Psoas muscle (tissue), 8 donors: ENCODE measurements at regions of chr20 and their contacts with region 1.

Region 1: GRCh38 chr20:46132705-46133120 is 14.6 kb downstream of the CD40 start:
- DNase-seq: peak; percentile 71 to 82
- ATAC-seq: peak; percentile 85 to 95 (median 90)
- H3K4me3 ChIP-seq: no peak overlapping the region
- H3K27ac ChIP-seq: no peak overlapping the region
- H3K4me1 ChIP-seq: peaks cover 13% of the 10 kb centered on the region
- H3K27me3 ChIP-seq: peaks cover 0 to 8% (median 0%) of the 10 kb centered on the region in 3 donors
- CTCF ChIP-seq: peak; percentile 86

Region 2: GRCh38 chr20:45406259-45407066 is 726.2 kb before region 1 on chr20:
- intact Hi-C with region 1: no loop called
- DNase-seq: peak; percentile 84 to 90
- ATAC-seq: peak; percentile 75 to 83 (median 78)
- H3K4me3 ChIP-seq: peak overlapping the region; percentile 99
- H3K27ac ChIP-seq: peak overlapping the region; percentile 99
- H3K4me1 ChIP-seq: peaks cover 33% of the 10 kb centered on the region
- H3K27me3 ChIP-seq: no peaks in the 10 kb centered on the region
- CTCF ChIP-seq: no peak

Region 3: DNA sequence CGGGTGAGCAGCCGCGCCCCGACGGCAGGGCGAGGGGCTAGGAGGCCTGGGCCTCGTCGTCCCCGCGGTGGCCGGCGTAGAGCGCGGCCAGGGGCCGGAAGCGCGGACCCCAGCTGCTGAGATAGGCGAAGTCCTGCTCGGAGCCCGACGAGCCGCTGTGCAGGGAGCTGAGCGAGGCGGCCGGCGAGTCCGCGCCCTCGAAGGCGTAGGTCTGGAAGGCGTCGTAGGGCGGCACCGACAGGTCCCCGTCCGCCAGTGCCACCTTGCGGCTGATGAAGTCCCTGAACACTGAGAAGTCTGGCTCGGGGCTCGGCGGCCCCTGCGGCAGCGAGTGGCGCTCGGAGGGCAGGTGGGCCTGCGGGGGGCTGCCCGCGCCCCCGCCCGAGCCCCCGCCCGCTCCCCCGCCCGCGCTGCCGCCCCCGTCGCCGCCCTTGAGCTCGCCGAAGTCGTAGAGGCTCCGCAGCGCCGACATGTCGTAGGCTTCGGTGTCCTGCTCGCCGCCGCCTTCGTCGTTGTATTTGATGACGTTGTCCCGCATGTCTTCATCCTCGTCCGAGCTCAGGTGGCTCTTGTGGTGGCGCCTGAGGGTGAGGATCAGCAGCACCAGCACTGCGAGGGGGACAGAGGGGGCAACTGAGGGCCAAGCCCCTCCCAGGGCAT is 41.9 kb after region 1 on chr20:
- intact Hi-C with region 1: loop called in 1 of 2 experiments (anchors 2 kb)
- DNase-seq: peak; percentile 76 to 84
- ATAC-seq: peak; percentile 70 to 88 (median 82)
- H3K4me3 ChIP-seq: no peak overlapping the region
- H3K27ac ChIP-seq: no peak overlapping the region
- H3K4me1 ChIP-seq: no peaks in the 10 kb centered on the region
- H3K27me3 ChIP-seq: peaks cover 4 to 53% (median 14%) of the 10 kb centered on the region in 3 donors
- CTCF ChIP-seq: peak; percentile 72

Region 4: GRCh38 chr20:46255429-46256104 is 122.9 kb after region 1 on chr20:
- intact Hi-C with region 1: loop called in 1 of 2 experiments (anchors 5 kb)
- DNase-seq: peak; percentile 61 to 82
- ATAC-seq: peak; percentile 26 to 70 (median 58)
- H3K4me3 ChIP-seq: no peak overlapping the region
- H3K27ac ChIP-seq: no peak overlapping the region
- H3K4me1 ChIP-seq: no peaks in the 10 kb centered on the region
- H3K27me3 ChIP-seq: peaks cover 4 to 40% (median 10%) of the 10 kb centered on the region in 3 donors
- CTCF ChIP-seq: no peak

Region 5: DNA sequence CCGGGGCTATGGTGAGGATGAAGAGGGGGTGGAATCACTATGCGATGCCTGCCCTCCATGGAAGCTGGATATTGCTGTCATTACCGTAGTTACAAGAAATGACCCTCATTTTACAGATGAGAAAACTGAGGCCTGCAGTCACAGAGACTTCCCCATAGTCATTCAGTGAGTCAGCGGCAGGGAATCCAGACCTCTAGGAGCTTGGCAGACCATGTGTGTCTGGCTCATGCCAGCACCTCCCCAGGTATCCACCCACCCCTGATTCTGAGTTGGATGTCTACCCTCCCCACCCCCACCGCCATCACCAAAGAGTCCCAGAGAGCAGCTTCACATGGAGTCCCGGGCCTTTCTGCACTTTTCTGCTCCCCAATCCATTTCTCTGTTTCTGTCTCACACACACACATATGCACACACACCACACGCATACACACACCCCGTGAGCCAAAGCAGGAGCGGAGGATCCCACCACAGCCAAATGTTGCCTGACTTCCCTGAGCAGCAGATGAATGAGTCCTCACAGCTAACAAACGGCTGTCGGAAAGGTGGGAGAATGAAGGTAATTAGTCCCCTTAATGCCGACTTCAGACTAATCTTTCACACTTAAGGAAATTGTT is 150.8 kb after region 1 on chr20:
- intact Hi-C with region 1: no loop called
- DNase-seq: no peak
- ATAC-seq: no peak
- H3K4me3 ChIP-seq: no peak overlapping the region
- H3K27ac ChIP-seq: no peak overlapping the region
- H3K4me1 ChIP-seq: no peaks in the 10 kb centered on the region
- H3K27me3 ChIP-seq: peaks cover 0 to 70% (median 15%) of the 10 kb centered on the region in 3 donors
- CTCF ChIP-seq: no peak

Region 6: DNA sequence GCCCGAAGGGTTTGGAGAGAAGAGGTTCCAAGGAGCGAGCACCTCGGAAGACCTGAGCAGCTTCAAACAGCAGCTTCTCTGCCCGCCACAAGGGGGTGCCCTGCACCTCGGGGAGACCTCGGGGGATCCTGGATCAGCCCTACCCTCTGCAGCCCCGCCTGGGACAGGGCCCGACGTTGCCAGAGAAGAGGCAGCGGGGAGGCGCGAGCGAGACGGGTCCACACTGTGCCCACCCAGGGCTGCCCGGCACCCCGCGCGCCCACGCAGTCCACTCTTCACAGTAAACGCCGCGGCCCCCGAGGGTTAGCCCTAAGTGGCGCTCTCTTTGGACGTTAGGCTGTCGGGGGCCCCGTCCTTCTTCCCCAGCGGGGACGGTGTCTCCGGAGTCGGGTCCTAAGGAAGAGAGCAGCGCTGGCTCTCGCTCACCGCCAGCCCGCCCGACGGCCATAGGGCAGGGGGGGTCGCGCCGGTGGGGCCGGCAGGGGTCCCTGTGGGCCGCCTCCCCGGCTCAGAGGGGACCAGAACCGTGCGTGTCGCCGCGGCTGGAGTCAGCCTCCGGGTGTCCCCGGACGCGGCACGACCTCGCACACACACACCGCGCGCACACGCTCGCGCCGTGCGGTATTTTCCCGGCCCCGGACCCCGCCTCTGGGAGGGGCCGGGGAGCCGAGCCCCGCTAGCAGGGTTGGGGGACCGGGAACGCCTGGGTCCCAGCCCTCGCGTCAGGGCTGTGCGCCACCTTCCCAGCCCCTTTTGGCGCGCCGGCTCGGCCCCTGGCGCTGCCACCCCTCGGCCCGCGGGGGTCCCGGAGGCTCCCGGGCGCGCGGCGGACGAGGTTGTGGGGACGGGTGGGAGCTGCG is 174.7 kb after region 1 on chr20:
- intact Hi-C with region 1: loop called (anchors 5 kb)
- DNase-seq: peak; percentile 57 to 81
- ATAC-seq: peak; percentile 75 to 88 (median 81)
- H3K4me3 ChIP-seq: peak overlapping the region; percentile 63
- H3K27ac ChIP-seq: no peak overlapping the region
- H3K4me1 ChIP-seq: no peaks in the 10 kb centered on the region
- H3K27me3 ChIP-seq: peaks cover 0 to 92% (median 14%) of the 10 kb centered on the region in 3 donors
- CTCF ChIP-seq: peak; percentile 85

Region 7: GRCh38 chr20:46349035-46349741 is 216.5 kb after region 1 on chr20:
- intact Hi-C with region 1: loop called (anchors 1 to 5 kb)
- DNase-seq: peak; percentile 66 to 79
- ATAC-seq: peak; percentile 62 to 85 (median 80)
- H3K4me3 ChIP-seq: no peak overlapping the region
- H3K27ac ChIP-seq: no peak overlapping the region
- H3K4me1 ChIP-seq: no peaks in the 10 kb centered on the region
- H3K27me3 ChIP-seq: no peaks in the 10 kb centered on the region
- CTCF ChIP-seq: peak; percentile 85